IMR-90 (cell line): ENCODE measurements at regions of chrX and their contacts with region 1.

Region 1: GRCh38 chrX:82070941-82071340 is 869.0 kb downstream of the SH3BGRL start:
- DNase-seq: no peak
- ATAC-seq: no peak
- H3K4me3 ChIP-seq: no peak overlapping the region
- H3K27ac ChIP-seq: no peak overlapping the region
- H3K4me1 ChIP-seq: no peaks in the 10 kb centered on the region
- H3K27me3 ChIP-seq: no peaks in the 10 kb centered on the region
- CTCF ChIP-seq: no peak
- POLR2A ChIP-seq: no peak
- RAD21 ChIP-seq: no peak

Region 2: GRCh38 chrX:81890521-81890920 is 180.4 kb before region 1 on chrX:
- CTCF ChIA-PET with region 1: no interaction called
- POLR2A ChIA-PET with region 1: no interaction called
- dilution Hi-C with region 1: no loop called
- in situ Hi-C with region 1: no loop called
- intact Hi-C with region 1: no loop called
- DNase-seq: no peak
- ATAC-seq: no peak
- H3K4me3 ChIP-seq: no peak overlapping the region
- H3K27ac ChIP-seq: no peak overlapping the region
- H3K4me1 ChIP-seq: no peaks in the 10 kb centered on the region
- H3K27me3 ChIP-seq: no peaks in the 10 kb centered on the region
- CTCF ChIP-seq: no peak
- POLR2A ChIP-seq: no peak
- RAD21 ChIP-seq: no peak

Region 3: DNA sequence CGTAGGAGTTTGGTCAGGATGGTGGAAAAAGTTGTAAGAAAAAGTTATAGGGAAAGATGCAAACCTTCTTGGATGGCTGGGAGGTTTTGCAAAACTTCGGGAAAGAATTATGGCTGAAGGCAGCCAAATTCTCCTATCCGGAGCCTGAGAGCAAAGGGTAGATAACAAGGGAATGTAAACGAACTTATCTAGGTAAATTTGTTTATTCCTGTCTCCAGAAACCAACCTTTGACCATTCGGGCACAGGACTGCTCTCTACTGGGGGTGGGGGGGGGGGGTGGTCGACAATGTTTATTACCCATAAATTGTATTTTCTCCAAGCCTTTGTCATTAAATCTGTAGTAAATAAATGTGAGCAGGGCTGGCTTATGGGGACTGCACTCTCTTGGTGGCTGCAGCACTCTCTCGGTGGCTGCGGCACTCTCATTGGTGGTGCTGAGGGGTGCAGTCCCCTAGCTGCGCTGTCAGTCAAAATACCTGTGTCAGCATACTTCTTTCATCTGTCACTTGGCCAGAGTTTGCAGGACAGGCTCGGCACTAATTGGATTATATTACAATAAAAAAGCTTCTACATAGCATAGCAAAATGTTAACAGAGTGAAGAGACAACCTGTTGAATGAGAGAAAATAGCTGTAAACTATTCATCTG is 41.2 kb before region 1 on chrX:
- CTCF ChIA-PET with region 1: no interaction called
- POLR2A ChIA-PET with region 1: no interaction called
- dilution Hi-C with region 1: no loop called
- in situ Hi-C with region 1: no loop called
- intact Hi-C with region 1: loop called (anchors 1 kb)
- DNase-seq: no peak
- ATAC-seq: no peak
- H3K4me3 ChIP-seq: no peak overlapping the region
- H3K27ac ChIP-seq: no peak overlapping the region
- H3K4me1 ChIP-seq: no peaks in the 10 kb centered on the region
- H3K27me3 ChIP-seq: no peaks in the 10 kb centered on the region
- CTCF ChIP-seq: no peak
- POLR2A ChIP-seq: no peak
- RAD21 ChIP-seq: no peak